GM12878 (cell line): ENCODE measurements at regions of chr12 and their contacts with region 1.

Region 1: DNA sequence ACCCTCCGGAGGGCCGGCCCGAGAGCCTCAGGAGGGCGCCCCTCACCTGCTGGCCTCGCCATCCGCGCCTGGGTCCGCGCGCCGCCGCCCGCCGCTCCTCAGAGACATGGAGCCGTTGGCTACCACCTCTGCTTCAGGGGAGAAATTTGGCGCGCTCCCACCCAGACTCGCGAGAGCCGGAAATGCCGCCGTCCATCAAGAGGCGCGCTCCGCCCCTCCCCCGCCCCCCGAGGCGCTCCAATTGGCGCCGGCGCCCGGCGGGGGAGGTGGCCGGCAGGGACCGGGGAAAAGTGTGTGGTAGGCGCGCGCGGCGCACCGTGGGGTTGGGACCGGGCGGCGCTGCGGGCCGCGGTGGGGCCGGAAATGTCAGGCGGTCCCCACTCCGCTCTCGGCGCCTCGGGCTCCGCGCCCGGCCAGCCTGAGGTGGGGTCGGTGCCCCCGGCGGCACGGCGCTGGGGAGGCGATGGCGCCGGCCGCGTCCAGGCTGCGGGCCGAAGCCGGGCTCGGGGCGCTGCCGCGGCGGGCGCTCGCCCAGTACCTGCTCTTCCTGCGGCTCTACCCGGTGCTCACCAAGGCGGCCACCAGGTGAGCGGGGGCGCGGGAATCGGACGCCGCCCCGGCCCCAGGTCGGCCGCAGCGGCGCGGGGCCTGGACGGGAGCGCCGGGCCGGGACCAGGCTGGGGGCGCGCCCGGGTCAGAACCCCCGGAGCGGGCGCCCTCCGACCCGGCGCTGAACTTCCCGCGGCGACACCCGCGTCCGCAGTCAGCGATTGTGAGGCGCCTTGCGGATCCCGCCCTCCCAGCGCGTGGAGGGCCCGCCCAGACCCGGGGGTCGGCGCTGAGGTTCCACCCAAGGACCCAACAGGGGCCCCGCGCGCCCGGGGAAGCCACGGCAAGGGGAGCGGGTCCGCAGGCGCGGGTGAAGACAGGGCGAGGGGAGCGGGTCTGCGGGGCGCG is at the starts of genes POLE and PXMP2:
- DNase-seq: peak; percentile 66
- ATAC-seq: peak; percentile 96
- H3K4me3 ChIP-seq: peak within 1 kb of the TSS; percentile 83
- H3K27ac ChIP-seq: peak within 1 kb of the TSS; percentile 83
- H3K4me1 ChIP-seq: peaks cover 5% of the 10 kb centered on the region
- H3K27me3 ChIP-seq: no peaks in the 10 kb centered on the region
- CTCF ChIP-seq: peak in 1 of 3 experiments; percentile 37; a peak in 2 of 6 replicates
- EP300 ChIP-seq: 0 out of 4 replicates have a peak, but pooled peaks of 1 of the 2 experiments have one; percentile 9
- POLR2A ChIP-seq: peak; percentile 92
- RAD21 ChIP-seq: peak; percentile 34; the same call in 1 of the 2 replicates
- polyA plus RNA-seq, gene POLE: 2.3 to 3.5 TPM
- polyA plus RNA-seq, gene PXMP2: 4.0 to 10.3 TPM

Region 2: DNA sequence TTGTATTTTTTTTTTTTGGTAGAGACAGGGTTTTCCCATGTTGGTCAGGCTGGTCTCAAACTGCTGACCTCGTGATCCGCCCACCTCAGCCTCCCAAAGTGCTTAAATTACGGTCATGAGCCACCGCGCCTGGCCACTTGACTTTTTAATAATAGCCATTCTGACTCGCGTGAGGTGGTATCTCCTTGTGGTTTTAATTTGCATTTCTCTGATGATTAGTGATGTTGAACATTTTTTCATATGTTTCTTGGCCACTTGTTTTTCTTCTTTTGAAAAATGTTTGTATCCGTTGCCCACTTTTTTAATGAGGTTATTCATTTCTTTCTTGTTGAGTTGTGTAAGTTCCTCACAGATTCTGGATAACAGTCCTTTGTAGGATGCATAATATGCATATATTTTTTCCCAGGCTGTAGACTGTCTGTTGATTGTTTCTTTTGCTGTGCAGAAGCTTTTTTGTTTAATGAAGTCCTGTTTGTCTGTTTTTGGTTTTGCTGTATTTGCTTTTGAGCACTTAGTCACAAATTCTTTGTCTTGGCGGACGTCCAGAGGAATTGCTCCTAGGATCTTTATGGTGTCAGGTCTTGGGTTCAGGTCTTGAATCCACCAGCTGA is 12.8 kb after region 1 on chr12:
- CTCF ChIA-PET with region 1: no interaction called
- POLR2A ChIA-PET with region 1: no interaction called
- RAD21 ChIA-PET with region 1: no interaction called
- SMC1A ChIA-PET with region 1: interaction called, 3 read pairs
- in situ Hi-C with region 1: no loop called
- intact Hi-C with region 1: loop called (anchors 2 kb)
- DNase-seq: peak; percentile 44
- ATAC-seq: peak; percentile 90
- H3K4me3 ChIP-seq: no peak overlapping the region
- H3K27ac ChIP-seq: peak overlapping the region; percentile 27
- H3K4me1 ChIP-seq: peaks cover 15% of the 10 kb centered on the region
- H3K27me3 ChIP-seq: no peaks in the 10 kb centered on the region
- CTCF ChIP-seq: no peak
- EP300 ChIP-seq: peak in 1 of 2 experiments; percentile 70; a peak in 2 of 4 replicates
- POLR2A ChIP-seq: no peak
- RAD21 ChIP-seq: no peak

Region 3: DNA sequence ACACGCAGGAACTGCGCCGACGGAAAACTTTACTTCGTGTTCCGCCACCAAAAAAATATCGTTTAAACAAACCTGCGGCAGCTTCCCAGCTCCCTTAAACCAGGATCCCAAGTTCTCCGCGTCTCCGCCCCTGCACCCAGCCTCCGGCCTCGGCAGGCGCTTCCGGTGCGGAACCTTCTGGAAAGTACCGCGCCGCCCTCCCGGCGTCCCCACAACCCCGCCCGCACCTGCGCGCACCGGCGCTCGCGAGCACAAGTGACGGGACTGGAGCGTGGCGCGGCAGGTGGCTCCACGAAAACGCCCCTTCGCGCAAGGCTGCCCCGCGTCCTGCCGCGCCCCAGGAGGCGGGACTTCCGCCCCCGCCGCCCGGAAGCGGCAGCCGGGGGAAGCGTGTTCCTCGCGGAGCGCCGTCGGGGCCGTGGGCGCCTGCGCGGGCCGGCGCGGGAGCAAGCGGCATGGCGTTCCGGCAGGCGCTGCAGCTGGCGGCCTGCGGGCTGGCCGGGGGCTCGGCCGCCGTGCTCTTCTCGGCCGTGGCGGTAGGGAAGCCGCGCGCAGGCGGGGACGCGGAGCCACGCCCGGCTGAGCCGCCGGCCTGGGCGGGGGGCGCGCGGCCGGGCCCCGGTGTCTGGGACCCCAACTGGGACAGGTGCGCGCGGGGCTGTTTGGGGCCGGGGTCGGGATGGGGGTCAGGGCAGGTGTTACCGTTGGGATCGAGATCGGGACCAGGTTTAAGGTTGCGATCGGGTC is 23.1 kb after region 1 on chr12 and contains the start of gene PGAM5:
- CTCF ChIA-PET with region 1: interaction called, 3 read pairs
- POLR2A ChIA-PET with region 1: interaction called, 7 read pairs
- RAD21 ChIA-PET with region 1: no interaction called
- SMC1A ChIA-PET with region 1: interaction called, 3 read pairs
- in situ Hi-C with region 1: no loop called
- intact Hi-C with region 1: loop called (anchors 1 kb)
- DNase-seq: peak; percentile 74
- ATAC-seq: peak; percentile 95
- H3K4me3 ChIP-seq: peak within 1 kb of the TSS; percentile 95
- H3K27ac ChIP-seq: peak within 1 kb of the TSS; percentile 97
- H3K4me1 ChIP-seq: no peaks in the 10 kb centered on the region; the same call in 1 of the 2 replicates
- H3K27me3 ChIP-seq: no peaks in the 10 kb centered on the region
- CTCF ChIP-seq: 0 out of 6 replicates have a peak, but pooled peaks of 1 of the 3 experiments have one; percentile 7
- EP300 ChIP-seq: peak; percentile 39 to 68; a peak in 2 of 4 replicates
- POLR2A ChIP-seq: peak; percentile 89
- RAD21 ChIP-seq: no peak
- polyA plus RNA-seq, gene PGAM5: 9.6 to 16.4 TPM

Region 4: DNA sequence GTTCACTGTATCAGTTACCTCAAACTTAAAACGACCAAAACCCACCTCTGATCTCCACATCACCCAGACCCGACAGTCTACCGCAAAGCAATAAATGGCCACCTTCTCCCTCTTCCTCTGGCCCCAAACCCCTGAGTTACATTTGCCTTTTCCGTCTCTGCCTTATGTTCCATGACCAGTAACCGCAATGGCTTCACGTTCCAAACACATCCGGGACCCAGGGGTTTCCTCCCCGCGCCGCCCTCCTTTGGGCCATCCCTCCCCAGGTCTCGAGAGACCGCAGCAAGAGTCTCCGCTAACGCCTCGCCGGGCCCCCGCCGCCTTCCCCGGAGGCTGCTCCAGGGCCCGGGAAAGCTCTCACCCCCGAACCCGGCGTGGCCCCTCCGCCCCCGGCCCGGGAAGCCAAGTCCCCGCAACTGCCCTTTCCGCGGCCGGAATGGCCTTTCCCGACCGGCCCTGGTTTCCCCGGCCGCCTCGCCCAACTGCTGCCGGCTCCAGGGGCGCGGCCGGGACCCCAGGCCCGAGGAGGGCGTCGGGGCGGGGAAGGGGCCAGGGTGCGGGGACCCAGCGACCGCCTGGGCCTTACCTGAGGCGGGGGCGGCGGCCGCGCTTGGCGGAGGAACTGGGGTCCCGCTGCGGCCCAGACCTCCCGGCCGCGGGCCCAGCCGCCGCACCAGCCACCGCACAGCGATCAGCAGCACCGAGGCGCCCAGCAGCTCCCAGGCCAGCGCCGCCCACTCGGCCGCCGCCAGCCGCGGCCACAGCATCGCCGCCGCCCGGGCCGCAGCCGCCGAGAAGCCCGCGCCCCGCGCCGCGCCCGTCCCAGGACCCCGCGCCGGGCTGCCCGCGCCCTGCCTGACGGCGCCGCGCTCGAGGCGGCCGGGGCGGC is 73.8 kb after region 1 on chr12 and contains the start of gene ANKLE2:
- CTCF ChIA-PET with region 1: no interaction called
- POLR2A ChIA-PET with region 1: interaction called, 3 read pairs
- RAD21 ChIA-PET with region 1: no interaction called
- SMC1A ChIA-PET with region 1: no interaction called
- in situ Hi-C with region 1: no loop called
- intact Hi-C with region 1: loop called (anchors 1 kb)
- DNase-seq: no peak
- ATAC-seq: peak; percentile 45
- H3K4me3 ChIP-seq: peak within 1 kb of the TSS; percentile 90
- H3K27ac ChIP-seq: peak within 1 kb of the TSS; percentile 85
- H3K4me1 ChIP-seq: no peaks in the 10 kb centered on the region
- H3K27me3 ChIP-seq: no peaks in the 10 kb centered on the region
- CTCF ChIP-seq: no peak
- EP300 ChIP-seq: no peak
- POLR2A ChIP-seq: peak; percentile 42; the same call in 1 of the 2 replicates
- RAD21 ChIP-seq: no peak
- polyA plus RNA-seq, gene ANKLE2: 4.3 to 6.7 TPM